ENCODE measurements at regions of chr5 and their contacts with region 1.

Region 1: GRCh38 chr5:179166886-179167841 is 107.0 kb downstream of the ZNF354C start:
- DNase-seq: peak; percentile 68 to 73
- H3K4me3 ChIP-seq: peak overlapping the region in 1 of 2 donors; percentile 24
- H3K27ac ChIP-seq: peak overlapping the region; percentile 33 to 43
- H3K4me1 ChIP-seq: no peaks in the 10 kb centered on the region
- H3K27me3 ChIP-seq: no peaks in the 10 kb centered on the region
- CTCF ChIP-seq: peak; percentile 86 to 99 (median 93)
- POLR2A ChIP-seq: peak in 1 of 2 donors; percentile 36

Region 2: DNA sequence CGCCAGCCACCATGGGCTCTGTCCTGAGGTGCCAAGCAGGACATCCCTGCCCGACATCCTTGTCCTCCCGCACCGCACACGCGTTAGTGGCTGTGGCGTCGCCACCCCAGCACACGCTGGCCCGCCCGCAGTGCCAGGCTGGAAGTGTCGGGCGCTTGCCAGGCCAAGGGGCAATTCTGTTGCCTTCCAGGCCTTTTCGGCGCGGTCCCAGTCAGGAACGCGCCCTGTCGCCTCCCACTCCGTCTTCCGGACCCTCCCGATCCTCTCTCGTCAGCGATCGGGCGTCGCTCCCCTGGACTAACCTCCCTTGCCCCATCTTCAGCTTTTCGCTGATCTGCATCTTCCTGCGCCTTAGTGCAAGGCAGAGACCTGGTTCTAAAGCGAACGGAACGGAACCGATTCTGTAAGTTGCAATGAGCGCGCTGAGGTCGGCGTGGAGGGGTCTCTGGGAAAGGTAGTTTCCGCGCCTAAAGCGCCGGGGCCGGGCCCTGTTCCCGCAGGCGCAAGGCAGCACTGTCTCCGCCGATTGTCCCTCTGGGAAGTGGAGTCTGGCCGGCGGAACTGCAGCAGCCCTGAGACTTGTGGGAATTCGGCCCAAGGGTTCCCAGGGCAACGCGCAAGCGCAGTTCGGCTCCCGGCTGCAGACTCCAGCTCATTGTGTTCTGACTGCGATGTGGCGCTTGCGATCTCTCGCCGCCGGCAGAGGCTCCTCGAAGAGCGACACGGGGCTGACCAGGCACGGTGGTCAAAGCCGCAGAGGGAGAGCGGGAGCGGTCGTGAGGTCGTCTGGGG is 226.4 kb before region 1 on chr5 and contains the start of gene ZNF454:
- intact Hi-C with region 1: no loop called
- DNase-seq: peak; percentile 93 to 95
- H3K4me3 ChIP-seq: peak within 1 kb of the TSS; percentile 60 to 73
- H3K27ac ChIP-seq: peak within 1 kb of the TSS; percentile 59 to 78
- H3K4me1 ChIP-seq: peaks cover 0 to 5% of the 10 kb centered on the region in 2 donors
- H3K27me3 ChIP-seq: no peaks in the 10 kb centered on the region
- CTCF ChIP-seq: no peak
- POLR2A ChIP-seq: peak in 1 of 2 donors; percentile 41
- total RNA-seq, gene ZNF454: 0.59 to 11.8 (median 6.9) TPM

Region 3: GRCh38 chr5:179284751-179285631 is 117.8 kb after region 1 on chr5:
- intact Hi-C with region 1: no loop called
- DNase-seq: peak; percentile 76
- H3K4me3 ChIP-seq: no peak overlapping the region
- H3K27ac ChIP-seq: peak overlapping the region; percentile 62 to 75
- H3K4me1 ChIP-seq: peaks cover 0 to 16% of the 10 kb centered on the region in 2 donors
- H3K27me3 ChIP-seq: no peaks in the 10 kb centered on the region
- CTCF ChIP-seq: no peak
- POLR2A ChIP-seq: no peak

Region 4: DNA sequence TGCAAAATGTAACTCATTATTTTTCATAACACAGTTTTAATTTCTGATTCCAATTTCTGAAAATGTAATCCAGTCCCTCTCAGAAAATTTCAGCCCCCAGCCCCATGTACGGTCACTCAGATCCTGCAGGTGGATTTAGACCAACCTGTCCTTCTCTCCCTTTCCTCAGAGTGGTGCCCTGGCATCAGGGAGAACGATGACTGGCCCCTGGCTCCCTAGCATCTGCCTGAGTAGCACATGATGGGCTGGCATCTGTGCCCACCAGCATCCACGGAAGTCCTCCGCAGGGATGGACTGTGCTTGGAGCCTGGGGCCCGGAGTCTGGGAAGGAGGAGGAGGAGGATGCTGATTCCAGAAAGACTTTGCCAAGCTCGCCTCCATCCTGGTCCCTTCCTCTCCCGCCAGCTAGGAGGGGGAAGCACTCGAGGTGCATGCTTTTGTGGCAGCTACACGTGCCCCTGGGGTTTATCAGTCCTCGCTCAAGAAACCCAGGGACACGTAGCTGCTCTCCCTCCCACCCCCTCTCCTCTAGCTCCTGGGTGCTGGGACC is 328.8 kb after region 1 on chr5:
- intact Hi-C with region 1: loop called (anchors 5 kb)
- DNase-seq: no peak
- H3K4me3 ChIP-seq: no peak overlapping the region
- H3K27ac ChIP-seq: no peak overlapping the region
- H3K4me1 ChIP-seq: no peaks in the 10 kb centered on the region
- H3K27me3 ChIP-seq: peaks cover 0 to 4% of the 10 kb centered on the region in 2 donors
- CTCF ChIP-seq: no peak
- POLR2A ChIP-seq: no peak

Measured in uterus (tissue), 4 donors.